ENCODE measurements at regions of chr10 and their contacts with region 1.

Region 1: DNA sequence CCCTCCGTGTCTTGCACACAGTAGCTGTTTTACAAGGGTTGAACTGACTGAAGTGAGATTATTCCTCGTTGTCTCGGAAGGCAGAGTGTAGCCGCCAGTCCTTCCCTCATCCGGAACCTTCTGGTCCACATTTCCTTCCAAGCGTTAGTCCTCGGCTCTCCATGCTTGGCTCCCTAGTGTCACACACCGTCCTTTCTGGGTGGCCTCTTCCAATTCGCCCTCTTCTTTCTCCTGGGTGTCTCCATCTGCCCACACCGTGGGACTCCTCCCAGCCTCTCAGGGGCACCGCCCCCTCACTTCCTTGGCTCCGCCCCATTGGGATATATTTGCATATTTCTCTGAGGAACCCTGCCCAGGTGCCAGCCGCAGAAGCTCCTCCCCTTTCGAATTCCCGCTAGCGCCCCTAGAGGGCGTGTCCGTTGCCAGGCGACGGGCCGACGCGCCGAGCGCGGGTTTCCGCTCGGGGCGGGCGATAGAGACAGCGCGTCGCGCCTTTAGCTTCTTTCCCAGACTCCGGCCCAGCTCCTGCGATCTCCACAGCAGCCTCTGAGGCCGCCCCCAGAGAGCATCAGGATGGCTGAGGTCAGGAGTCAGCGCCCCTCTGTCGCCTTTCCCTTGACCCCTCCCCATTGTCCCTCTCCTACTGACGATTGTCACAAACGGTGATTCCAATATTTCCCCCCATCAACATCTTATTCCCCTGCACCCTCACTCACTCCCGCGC is at the start of gene CFAP58:
- DNase-seq: peak; percentile 98
- H3K27ac ChIP-seq: peak within 1 kb of the TSS; percentile 47
- CTCF ChIP-seq: peak; percentile 71

Region 2: DNA sequence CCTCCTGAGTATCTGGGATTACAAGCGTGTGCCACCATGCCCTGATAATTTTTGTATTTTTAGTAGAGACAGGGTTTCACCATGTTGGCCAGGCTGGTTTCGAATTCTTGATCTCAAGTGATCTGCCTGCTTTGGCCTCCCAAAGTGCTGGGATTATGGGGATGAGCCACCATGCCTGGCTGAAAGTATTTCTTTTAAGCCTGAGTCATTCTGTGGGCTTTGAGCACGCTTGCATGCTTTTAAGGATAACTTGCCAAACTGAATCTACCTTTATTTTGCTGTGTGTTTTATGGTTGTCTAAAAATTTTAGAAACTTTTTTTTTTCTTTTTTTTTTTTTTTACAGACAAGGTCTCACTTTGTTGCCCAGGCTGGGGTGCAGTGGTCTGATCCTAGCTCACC is 1402.2 kb before region 1 on chr10:
- CTCF ChIA-PET with region 1: no interaction called
- POLR2A ChIA-PET with region 1: no interaction called
- DNase-seq: no peak
- H3K27ac ChIP-seq: no peak overlapping the region
- CTCF ChIP-seq: no peak

Region 3: DNA sequence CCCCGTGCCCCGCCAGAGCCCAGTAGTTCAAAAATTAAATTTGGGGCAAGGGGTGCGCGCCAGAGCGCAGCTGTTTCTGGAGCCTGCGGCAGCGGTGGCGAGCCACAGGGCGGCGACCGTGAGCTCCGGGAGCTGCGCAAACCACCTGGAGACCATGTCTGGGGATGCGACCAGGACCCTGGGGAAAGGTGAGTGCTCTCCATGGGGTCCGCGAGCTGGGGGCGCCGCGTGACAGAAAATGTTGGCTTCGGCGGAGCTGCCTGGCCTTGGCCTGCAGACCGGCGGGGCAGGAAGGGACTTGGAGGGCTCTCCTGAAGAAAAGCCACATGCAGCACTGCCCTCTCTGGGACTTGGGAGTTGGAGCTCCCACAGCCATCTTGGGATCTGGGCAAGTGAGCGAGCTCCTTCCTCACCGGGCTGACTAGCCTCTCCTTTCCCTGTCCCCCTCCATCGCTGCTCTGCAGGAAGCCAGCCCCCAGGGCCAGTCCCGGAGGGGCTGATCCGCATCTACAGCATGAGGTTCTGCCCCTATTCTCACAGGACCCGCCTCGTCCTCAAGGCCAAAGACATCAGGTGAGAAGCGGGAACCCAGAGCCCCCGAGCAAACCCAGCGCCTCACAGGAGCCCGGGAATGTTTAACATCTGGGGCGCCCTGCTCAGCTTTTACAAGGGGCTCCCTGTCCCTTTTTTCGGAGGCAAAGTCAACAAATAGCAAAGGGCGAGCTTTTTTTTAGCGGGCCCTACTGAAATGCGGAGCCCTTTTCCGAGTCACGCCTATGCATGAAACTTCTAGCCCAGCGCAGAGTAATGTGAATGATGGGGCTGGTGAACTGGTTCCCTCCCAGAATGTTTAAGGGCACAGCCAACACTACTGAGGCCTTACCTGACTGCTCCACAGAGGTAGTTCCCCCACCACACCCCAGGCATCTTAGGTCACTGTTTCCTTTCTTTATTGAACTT is 78.4 kb before region 1 on chr10:
- CTCF ChIA-PET with region 1: interaction called, 50 read pairs
- POLR2A ChIA-PET with region 1: interaction called, 3 read pairs
- DNase-seq: peak; percentile 88
- H3K27ac ChIP-seq: peak overlapping the region; percentile 73
- CTCF ChIP-seq: peak; percentile 96

Region 4: GRCh38 chr10:104308439-104308903 is 45.0 kb before region 1 on chr10:
- CTCF ChIA-PET with region 1: interaction called, 40 read pairs
- POLR2A ChIA-PET with region 1: no interaction called
- DNase-seq: no peak
- H3K27ac ChIP-seq: no peak overlapping the region
- CTCF ChIP-seq: no peak

Region 5: GRCh38 chr10:104337974-104338735 is 15.3 kb before region 1 on chr10 and contains the start of gene ITPRIP:
- CTCF ChIA-PET with region 1: interaction called, 11 read pairs
- POLR2A ChIA-PET with region 1: interaction called, 6 read pairs
- DNase-seq: peak; percentile 70
- H3K27ac ChIP-seq: peak within 1 kb of the TSS; percentile 91
- CTCF ChIP-seq: no peak

Region 6: GRCh38 chr10:104367904-104368303 is 14.4 kb after region 1 on chr10:
- CTCF ChIA-PET with region 1: interaction called, 10 read pairs
- POLR2A ChIA-PET with region 1: no interaction called
- DNase-seq: no peak
- H3K27ac ChIP-seq: no peak overlapping the region
- CTCF ChIP-seq: no peak

Measured in RWPE1 (cell line).